Activated B cell treated with CpG ODN at 0.5 μM for 24 hours (primary cell): ENCODE measurements at regions of chr19 and their contacts with region 1.

Region 1: GRCh38 chr19:29610563-29611271 is 4.6 kb downstream of the POP4 start:
- DNase-seq: peak; percentile 65
- ATAC-seq: peak; percentile 80
- H3K4me3 Mint-ChIP-seq: no peak overlapping the region
- H3K27ac Mint-ChIP-seq: peak overlapping the region; percentile 83
- H3K4me1 Mint-ChIP-seq: peaks cover 27% of the 10 kb centered on the region
- H3K27me3 Mint-ChIP-seq: no peaks in the 10 kb centered on the region
- CTCF ChIP-seq: peak; percentile 32

Region 2: GRCh38 chr19:27793644-27794493 is 1816.8 kb before region 1 on chr19:
- CTCF ChIA-PET with region 1: no interaction called
- POLR2A ChIA-PET with region 1: interaction called, 12 read pairs
- intact Hi-C with region 1: loop called (anchors 5 kb)
- DNase-seq: peak; percentile 83
- ATAC-seq: peak; percentile 89
- H3K4me3 Mint-ChIP-seq: peak overlapping the region; percentile 95
- H3K27ac Mint-ChIP-seq: peak overlapping the region; percentile 93
- H3K4me1 Mint-ChIP-seq: peaks cover 35% of the 10 kb centered on the region
- H3K27me3 Mint-ChIP-seq: no peaks in the 10 kb centered on the region
- CTCF ChIP-seq: no peak

Region 3: DNA sequence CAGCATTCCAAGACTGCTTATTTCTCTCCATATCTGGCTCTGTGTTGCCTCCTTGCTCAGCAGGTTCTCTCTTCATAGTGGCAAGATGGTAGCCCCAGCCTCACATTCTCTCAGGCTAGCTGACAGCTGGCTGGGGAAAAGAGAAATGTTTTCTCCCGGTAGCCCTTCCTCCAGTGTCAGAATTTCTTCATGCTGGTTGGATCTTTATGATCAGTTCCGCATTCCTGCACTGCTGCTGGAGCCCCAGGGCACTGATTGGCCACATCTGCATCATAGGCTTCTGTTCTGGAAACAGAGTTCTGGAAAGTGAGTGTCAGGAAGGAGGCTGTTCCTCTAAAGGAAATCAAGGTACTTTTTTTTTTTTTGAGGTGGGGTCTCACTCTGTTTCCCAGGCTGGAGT is 19.9 kb after region 1 on chr19:
- CTCF ChIA-PET with region 1: no interaction called
- POLR2A ChIA-PET with region 1: no interaction called
- intact Hi-C with region 1: no loop called
- DNase-seq: no peak
- ATAC-seq: no peak
- H3K4me3 Mint-ChIP-seq: no peak overlapping the region
- H3K27ac Mint-ChIP-seq: no peak overlapping the region
- H3K4me1 Mint-ChIP-seq: no peaks in the 10 kb centered on the region
- H3K27me3 Mint-ChIP-seq: peaks cover 2% of the 10 kb centered on the region
- CTCF ChIP-seq: no peak

Region 4: DNA sequence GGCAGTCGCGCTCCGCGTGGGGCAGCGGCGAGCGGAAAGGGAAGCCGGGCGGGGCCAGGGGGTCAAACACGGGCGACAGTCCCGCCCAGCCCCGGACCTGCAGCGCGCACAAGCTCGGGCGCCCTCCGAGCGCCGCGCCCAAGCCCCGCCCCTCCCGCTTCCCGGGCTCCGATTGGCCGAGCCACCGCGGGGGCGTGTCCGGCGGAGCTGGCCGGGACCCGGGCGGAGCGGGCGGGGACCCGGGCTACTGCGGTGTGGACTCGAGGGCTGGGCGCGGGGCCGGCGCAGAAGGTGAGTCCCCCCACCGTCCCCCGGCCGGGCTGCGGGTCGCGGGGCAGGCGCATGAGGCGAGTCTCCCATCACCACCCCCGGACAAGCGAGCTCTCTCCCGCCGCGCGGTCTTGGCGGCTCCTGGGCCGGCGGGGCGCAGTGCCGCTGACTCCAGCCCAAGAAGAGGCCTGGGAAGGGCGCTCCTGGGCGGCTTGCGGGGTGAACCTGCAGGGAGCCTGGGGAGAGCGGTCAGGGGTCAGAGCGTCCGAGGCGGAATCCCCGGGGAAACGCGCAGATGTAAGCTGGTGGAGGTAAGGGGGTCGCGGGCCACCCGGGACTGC is 54.6 kb after region 1 on chr19 and contains the start of gene PLEKHF1:
- CTCF ChIA-PET with region 1: interaction called, 20 read pairs
- POLR2A ChIA-PET with region 1: interaction called, 62 read pairs
- intact Hi-C with region 1: loop called (anchors 1 kb)
- DNase-seq: peak; percentile 94
- ATAC-seq: peak; percentile 95
- H3K4me3 Mint-ChIP-seq: peak within 1 kb of the TSS; percentile 79
- H3K27ac Mint-ChIP-seq: peak within 1 kb of the TSS; percentile 68
- H3K4me1 Mint-ChIP-seq: peaks cover 38% of the 10 kb centered on the region
- H3K27me3 Mint-ChIP-seq: no peaks in the 10 kb centered on the region
- CTCF ChIP-seq: no peak
- total RNA-seq, gene PLEKHF1: 5.5 and 5.8 TPM in 2 replicates

Region 5: GRCh38 chr19:29680447-29680846 is 69.7 kb after region 1 on chr19:
- CTCF ChIA-PET with region 1: interaction called, 5 read pairs
- POLR2A ChIA-PET with region 1: interaction called, 13 read pairs
- intact Hi-C with region 1: no loop called
- DNase-seq: peak; percentile 55
- ATAC-seq: peak; percentile 97
- H3K4me3 Mint-ChIP-seq: peak overlapping the region; percentile 60
- H3K27ac Mint-ChIP-seq: peak overlapping the region; percentile 79
- H3K4me1 Mint-ChIP-seq: peaks cover 33% of the 10 kb centered on the region
- H3K27me3 Mint-ChIP-seq: no peaks in the 10 kb centered on the region
- CTCF ChIP-seq: no peak

Region 6: DNA sequence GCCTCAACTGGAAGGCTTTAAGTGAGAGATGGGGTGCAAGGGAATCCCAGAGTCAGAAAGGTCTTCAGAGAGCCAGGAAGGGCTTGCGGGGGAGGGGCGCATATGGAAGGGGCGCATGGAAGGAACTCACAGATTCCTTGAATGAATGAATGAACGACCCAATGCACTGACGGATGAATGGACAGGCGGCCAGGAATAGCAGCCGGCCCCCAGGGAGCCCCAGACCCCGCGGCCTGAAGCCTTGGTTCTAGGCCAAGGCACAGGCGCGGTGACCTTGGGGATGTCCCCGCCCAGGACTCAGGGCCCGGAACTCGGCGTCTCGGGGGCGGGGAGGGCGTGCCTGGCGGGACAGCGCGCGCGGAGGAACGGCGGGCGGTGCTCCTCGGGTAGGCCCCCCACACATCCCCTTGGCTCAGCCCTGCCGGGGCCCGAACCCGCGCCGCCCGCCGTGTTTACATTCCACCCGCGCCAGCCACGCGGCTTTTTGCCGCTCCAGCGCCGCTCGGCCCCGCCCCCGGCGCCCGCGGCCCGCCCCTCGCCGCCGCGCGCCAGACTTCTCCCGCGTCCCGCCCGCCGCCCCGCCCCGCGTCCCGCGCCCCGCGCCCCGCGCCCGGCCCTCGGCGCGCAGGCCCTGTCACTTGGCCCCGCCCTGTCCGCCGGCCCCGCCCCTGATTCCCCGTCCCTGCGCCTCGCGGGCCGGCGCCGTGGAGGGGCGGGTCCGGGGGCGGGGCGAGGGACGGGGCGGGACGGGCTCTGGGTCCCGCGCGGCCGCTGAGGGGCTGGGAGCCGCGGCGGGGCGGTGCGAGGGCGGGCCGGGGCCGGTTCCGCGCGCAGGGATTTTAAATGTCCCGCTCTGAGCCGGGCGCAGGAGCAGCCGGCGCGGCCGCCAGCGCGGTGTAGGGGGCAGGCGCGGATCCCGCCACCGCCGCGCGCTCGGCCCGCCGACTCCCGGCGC is 200.7 kb after region 1 on chr19 and contains the start of gene CCNE1:
- CTCF ChIA-PET with region 1: no interaction called
- POLR2A ChIA-PET with region 1: interaction called, 3 read pairs
- intact Hi-C with region 1: loop called (anchors 2 kb)
- DNase-seq: peak; percentile 95
- ATAC-seq: peak; percentile 94
- H3K4me3 Mint-ChIP-seq: peak within 1 kb of the TSS; percentile 85
- H3K27ac Mint-ChIP-seq: peak within 1 kb of the TSS; percentile 77
- H3K4me1 Mint-ChIP-seq: peaks cover 18% of the 10 kb centered on the region
- H3K27me3 Mint-ChIP-seq: no peaks in the 10 kb centered on the region
- CTCF ChIP-seq: no peak
- total RNA-seq, gene CCNE1: 3.4 and 4.1 TPM in 2 replicates

Region 7: DNA sequence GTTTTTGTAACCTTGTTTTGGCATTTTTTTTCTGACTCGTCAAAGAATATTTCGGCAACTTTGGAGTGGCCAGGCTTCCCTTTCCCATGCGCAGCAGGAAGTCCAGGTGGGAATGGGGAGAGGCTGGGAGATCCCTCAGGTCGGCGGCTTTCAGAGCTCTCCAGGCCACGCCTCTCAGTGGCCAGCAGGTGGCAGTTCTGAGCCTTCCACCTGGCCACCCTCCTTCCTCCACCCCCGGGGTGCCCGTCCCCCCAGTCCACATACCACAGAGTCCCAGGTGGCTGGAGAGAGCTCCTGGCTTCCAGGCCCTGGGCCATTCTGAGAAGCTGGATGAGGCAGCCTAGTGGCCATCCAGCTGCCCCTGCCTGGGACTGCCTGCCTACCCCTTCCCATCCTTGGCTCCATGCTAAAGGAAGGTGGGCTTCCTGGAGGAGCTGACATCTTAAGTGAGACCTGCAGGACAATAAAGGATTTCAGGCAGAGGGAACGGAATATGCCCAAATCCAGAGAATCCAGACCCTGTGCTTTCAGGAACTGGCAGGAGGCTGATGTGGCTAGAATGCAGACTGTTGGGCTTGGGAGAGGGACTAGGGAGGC is 247.4 kb after region 1 on chr19:
- CTCF ChIA-PET with region 1: no interaction called
- POLR2A ChIA-PET with region 1: no interaction called
- intact Hi-C with region 1: no loop called
- DNase-seq: no peak
- ATAC-seq: peak; percentile 66
- H3K4me3 Mint-ChIP-seq: no peak overlapping the region
- H3K27ac Mint-ChIP-seq: no peak overlapping the region
- H3K4me1 Mint-ChIP-seq: no peaks in the 10 kb centered on the region
- H3K27me3 Mint-ChIP-seq: peaks cover 29% of the 10 kb centered on the region
- CTCF ChIP-seq: no peak

Region 8: DNA sequence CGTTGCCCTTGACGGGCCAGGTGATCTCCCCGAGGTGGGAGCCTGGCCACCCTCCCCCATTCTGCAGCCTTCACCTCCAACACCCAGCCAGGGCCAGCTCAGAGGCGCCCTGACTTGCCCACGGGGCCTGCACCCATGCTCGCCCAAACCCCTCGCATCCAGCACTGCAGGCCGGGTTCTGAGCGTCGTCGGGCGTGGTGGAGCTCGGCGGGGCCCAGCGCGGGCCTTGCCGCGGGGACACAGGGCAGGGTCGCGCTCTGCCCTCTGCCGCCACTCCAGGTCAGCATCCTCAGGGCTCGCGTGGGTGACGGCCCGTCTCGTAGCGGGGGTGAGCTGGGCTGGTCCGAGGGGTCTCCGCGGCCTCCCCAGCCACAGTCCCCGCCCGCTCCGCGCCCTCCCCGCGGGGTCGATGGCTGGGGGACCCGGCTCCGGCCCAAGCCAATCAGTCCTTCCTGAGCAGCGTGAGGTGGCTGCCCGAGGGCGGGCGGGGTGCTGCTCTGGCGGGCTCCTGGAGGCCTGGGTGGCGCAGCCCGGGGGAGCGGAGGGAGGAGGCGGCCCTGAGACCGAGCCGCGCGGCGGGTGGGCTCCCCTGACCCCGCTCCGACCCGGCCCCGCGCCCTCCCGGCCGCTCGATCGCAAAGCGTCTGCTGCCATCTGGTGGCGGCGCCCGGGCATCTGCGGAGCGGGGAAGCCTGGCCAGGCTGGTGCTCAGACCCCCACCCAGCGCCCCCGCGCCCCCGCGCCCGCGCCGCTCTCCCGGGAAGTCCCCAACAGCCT is 262.5 kb after region 1 on chr19:
- CTCF ChIA-PET with region 1: no interaction called
- POLR2A ChIA-PET with region 1: interaction called, 3 read pairs
- intact Hi-C with region 1: loop called (anchors 1 kb)
- DNase-seq: peak; percentile 75
- ATAC-seq: peak; percentile 87
- H3K4me3 Mint-ChIP-seq: peak overlapping the region; percentile 70
- H3K27ac Mint-ChIP-seq: no peak overlapping the region
- H3K4me1 Mint-ChIP-seq: peaks cover 18% of the 10 kb centered on the region
- H3K27me3 Mint-ChIP-seq: peaks cover 20% of the 10 kb centered on the region
- CTCF ChIP-seq: no peak